ENCODE measurements at regions of chr3 and their contacts with region 1.

Region 1: GRCh38 chr3:149414557-149415231 is 37.2 kb upstream of the TM4SF1 start:
- DNase-seq: no peak
- H3K4me3 ChIP-seq: no peak overlapping the region
- H3K27ac ChIP-seq: no peak overlapping the region
- H3K4me1 ChIP-seq: no peaks in the 10 kb centered on the region
- H3K27me3 ChIP-seq: no peaks in the 10 kb centered on the region
- CTCF ChIP-seq: no peak

Region 2: DNA sequence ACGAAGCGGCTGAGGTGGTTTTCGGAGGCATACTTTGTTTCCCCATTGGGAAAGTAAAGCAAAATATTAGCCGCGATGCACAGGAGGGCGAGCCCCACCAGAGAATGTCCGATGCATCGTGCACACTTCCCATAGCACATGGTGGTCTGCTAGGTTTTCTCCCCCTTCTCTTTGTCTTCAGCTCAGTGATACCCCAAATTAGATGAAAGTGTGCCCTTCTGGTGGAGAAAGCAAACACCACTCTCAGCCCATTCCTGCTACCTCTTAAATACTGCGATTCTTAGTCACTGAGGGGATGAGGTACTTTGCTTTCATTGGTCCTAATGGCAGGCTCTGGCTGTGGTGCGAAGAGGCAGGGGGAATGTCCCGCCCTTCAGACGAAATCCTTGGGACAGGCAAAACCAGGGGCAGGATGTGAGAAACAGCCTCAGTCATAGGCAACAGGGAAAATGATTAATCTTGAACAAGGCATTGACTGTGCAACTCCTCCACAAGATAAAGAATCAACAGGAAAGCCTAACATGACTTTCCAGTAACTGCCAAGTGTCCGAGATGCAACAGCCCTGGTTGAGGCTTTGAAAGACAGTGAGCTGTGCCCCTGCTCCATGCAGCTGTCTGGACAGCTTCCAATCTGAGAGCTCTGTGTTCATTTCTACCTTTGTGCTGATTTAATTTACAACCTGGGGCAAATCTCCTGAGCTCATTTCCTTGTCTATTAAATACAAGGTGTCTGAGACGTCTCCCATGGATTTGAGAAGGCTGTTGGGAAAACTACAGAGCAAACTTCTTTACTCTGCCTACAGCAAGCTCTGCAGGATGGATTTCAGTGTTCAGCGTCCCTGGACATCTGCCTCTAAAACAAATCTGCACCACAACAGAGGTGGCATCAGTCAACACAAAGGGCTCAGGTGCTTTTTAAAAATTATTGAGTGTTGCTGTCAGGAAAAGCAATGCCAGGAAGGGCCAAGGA is 37.0 kb before region 1 on chr3 and contains the start of gene TM4SF1:
- CTCF ChIA-PET with region 1: no interaction called
- dilution Hi-C with region 1: no loop called
- in situ Hi-C with region 1: no loop called
- intact Hi-C with region 1: no loop called
- DNase-seq: peak; percentile 100
- H3K4me3 ChIP-seq: peak within 1 kb of the TSS; percentile 93 to 98 (median 94)
- H3K27ac ChIP-seq: peak within 1 kb of the TSS; percentile 100
- H3K4me1 ChIP-seq: peaks cover 51% of the 10 kb centered on the region
- H3K27me3 ChIP-seq: no peaks in the 10 kb centered on the region
- CTCF ChIP-seq: no peak
- total RNA-seq, gene TM4SF1: 121 to 246 TPM

Region 3: DNA sequence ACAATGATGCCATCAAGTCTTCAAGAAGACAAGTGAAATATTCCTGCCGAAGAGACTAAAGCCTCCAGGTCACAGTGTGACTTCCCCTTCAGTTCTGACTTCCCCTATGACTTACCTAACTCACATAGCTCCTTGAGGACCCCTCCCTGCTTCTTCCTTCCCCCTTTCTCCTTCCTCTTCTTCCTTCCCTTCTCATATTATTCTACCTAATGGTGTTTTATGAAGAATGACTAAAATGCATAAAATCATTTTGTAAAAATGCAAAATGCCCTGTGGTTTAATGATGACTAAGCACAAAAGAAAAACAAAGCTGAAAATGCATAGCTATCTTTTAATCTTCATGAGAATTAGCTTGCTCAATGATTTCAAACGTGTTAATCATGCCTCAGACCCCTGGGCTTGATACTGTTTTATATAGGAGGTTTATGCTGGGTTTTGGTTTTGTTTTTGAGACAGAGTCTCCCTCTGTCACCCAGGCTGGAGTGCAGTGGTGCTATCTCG is 33.7 kb after region 1 on chr3:
- CTCF ChIA-PET with region 1: no interaction called
- dilution Hi-C with region 1: loop called (anchors 5 kb)
- in situ Hi-C with region 1: no loop called
- intact Hi-C with region 1: no loop called
- DNase-seq: peak; percentile 78
- H3K4me3 ChIP-seq: no peak overlapping the region
- H3K27ac ChIP-seq: no peak overlapping the region
- H3K4me1 ChIP-seq: peaks cover 18% of the 10 kb centered on the region
- H3K27me3 ChIP-seq: no peaks in the 10 kb centered on the region
- CTCF ChIP-seq: no peak